GM12878 (cell line): ENCODE measurements at regions of chr5 and their contacts with region 1.

Region 1: GRCh38 chr5:23994581-23995370 is 487.4 kb downstream of the PRDM9 start:
- DNase-seq: no peak
- ATAC-seq: no peak
- H3K4me3 ChIP-seq: no peak overlapping the region
- H3K27ac ChIP-seq: no peak overlapping the region
- H3K4me1 ChIP-seq: no peaks in the 10 kb centered on the region
- H3K27me3 ChIP-seq: no peaks in the 10 kb centered on the region
- CTCF ChIP-seq: no peak; a peak in 1 of 6 replicates
- EP300 ChIP-seq: no peak
- POLR2A ChIP-seq: no peak
- RAD21 ChIP-seq: no peak

Region 2: GRCh38 chr5:23884405-23884804 is 110.4 kb before region 1 on chr5:
- CTCF ChIA-PET with region 1: interaction called, 4 read pairs
- POLR2A ChIA-PET with region 1: no interaction called
- RAD21 ChIA-PET with region 1: no interaction called
- SMC1A ChIA-PET with region 1: no interaction called
- in situ Hi-C with region 1: no loop called
- intact Hi-C with region 1: loop called (anchors 5 kb)
- DNase-seq: no peak
- ATAC-seq: peak; percentile 68
- H3K4me3 ChIP-seq: no peak overlapping the region
- H3K27ac ChIP-seq: no peak overlapping the region
- H3K4me1 ChIP-seq: no peaks in the 10 kb centered on the region
- H3K27me3 ChIP-seq: no peaks in the 10 kb centered on the region
- CTCF ChIP-seq: no peak
- EP300 ChIP-seq: no peak
- POLR2A ChIP-seq: no peak
- RAD21 ChIP-seq: no peak